ENCODE measurements at regions of chr1 and their contacts with region 1.

Region 1: GRCh38 chr1:40951943-40952743 is 27.4 kb upstream of the CTPS1 start:
- DNase-seq: no peak
- H3K4me3 ChIP-seq: no peak overlapping the region
- H3K27ac ChIP-seq: no peak overlapping the region
- H3K27me3 ChIP-seq: no peaks in the 10 kb centered on the region
- CTCF ChIP-seq: peak; percentile 89

Region 2: GRCh38 chr1:40679165-40679953 is 272.8 kb before region 1 on chr1:
- CTCF ChIA-PET with region 1: no interaction called
- POLR2A ChIA-PET with region 1: no interaction called
- DNase-seq: no peak
- H3K4me3 ChIP-seq: no peak overlapping the region
- H3K27ac ChIP-seq: no peak overlapping the region
- H3K27me3 ChIP-seq: peaks cover 12% of the 10 kb centered on the region
- CTCF ChIP-seq: no peak

Region 3: DNA sequence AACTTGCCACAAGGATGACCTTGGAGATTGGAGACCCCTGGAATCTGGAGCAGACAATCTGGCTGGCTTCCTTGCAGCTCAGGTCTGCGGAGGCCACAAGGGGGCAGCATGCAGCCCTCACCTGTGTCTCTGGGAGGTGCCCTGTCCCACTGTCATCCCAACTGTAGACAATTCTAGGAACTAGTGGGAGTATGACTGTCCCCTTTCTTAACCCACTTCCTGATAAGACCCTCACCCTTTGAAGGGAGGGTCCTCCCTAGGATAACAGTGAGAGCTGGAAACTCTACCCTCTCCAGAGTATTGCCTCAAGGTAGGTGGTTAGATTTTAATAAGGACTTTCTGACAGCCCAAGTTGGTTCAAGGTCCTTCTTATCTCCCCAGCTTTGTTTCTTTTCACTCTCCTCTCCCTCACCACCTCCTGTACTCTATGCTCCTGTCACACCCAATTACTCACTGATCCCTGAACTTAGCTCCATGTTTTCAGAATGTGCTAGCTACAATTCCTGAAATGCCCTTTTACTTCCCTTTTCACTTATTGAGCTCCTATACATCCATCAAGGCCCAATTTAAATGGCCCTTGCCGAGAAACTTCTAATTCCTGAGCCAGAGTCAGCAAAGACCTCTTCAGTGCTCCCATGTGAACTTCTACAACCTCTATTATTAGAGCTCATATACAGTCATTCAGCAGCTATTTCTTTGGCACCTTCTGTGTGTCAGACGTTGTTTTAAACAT is 177.7 kb before region 1 on chr1:
- CTCF ChIA-PET with region 1: interaction called, 64 read pairs
- POLR2A ChIA-PET with region 1: interaction called, 3 read pairs
- DNase-seq: no peak
- H3K4me3 ChIP-seq: no peak overlapping the region
- H3K27ac ChIP-seq: no peak overlapping the region
- H3K27me3 ChIP-seq: no peaks in the 10 kb centered on the region
- CTCF ChIP-seq: peak; percentile 70

Region 4: DNA sequence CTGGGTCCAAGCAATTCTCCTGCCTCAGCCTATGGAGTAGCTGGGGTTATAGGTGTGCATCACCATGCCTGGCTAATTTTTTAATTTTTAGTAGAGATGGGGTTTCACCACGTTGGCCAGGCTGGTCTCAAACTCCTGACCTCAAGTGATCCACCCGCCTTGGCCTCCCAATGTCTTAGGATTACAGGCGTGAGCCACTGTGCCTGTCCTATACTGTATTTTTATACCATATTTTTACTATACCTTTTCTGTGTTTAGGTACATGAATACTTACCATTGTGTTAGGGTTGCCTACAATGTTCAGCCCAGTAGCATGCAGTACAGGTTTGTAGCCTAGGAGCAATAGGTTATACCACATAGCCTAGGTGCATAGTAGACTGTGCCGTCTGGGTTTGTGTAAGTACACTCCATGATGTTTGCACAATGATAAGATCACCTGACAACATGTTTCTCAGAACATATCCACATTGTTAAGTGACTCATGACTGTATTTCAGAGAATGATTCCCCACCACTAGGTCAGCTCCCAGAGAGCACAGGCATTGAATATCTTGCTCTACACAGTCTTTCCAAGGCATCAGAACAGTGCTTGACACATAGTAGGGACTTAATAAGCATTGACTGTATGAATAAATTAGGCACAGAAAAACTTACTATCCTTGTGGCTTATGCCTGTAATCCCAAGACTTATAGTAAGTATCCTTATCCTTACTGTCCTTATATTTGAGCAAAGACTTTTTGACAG is 83.9 kb before region 1 on chr1:
- CTCF ChIA-PET with region 1: interaction called, 442 read pairs
- POLR2A ChIA-PET with region 1: no interaction called
- DNase-seq: no peak
- H3K4me3 ChIP-seq: no peak overlapping the region
- H3K27ac ChIP-seq: no peak overlapping the region
- H3K27me3 ChIP-seq: no peaks in the 10 kb centered on the region
- CTCF ChIP-seq: no peak

Region 5: GRCh38 chr1:40929155-40929554 is 23.0 kb before region 1 on chr1:
- CTCF ChIA-PET with region 1: interaction called, 10 read pairs
- POLR2A ChIA-PET with region 1: no interaction called
- DNase-seq: no peak
- H3K4me3 ChIP-seq: no peak overlapping the region
- H3K27ac ChIP-seq: no peak overlapping the region
- H3K27me3 ChIP-seq: peaks cover 7% of the 10 kb centered on the region
- CTCF ChIP-seq: no peak

Region 6: GRCh38 chr1:40965529-40965928 is 13.4 kb after region 1 on chr1:
- CTCF ChIA-PET with region 1: interaction called, 33 read pairs
- POLR2A ChIA-PET with region 1: interaction called, 3 read pairs
- DNase-seq: no peak
- H3K4me3 ChIP-seq: no peak overlapping the region
- H3K27ac ChIP-seq: no peak overlapping the region
- H3K27me3 ChIP-seq: no peaks in the 10 kb centered on the region
- CTCF ChIP-seq: no peak